Activated CD8-positive, alpha-beta T cell treated with anti-CD3 and anti-CD28 coated beads, Interleukin-2, amount 10 ng/mL, durations not matched to agents 7 days and 5 days (primary cell): ENCODE measurements at regions of chr2 and their contacts with region 1.

Region 1: DNA sequence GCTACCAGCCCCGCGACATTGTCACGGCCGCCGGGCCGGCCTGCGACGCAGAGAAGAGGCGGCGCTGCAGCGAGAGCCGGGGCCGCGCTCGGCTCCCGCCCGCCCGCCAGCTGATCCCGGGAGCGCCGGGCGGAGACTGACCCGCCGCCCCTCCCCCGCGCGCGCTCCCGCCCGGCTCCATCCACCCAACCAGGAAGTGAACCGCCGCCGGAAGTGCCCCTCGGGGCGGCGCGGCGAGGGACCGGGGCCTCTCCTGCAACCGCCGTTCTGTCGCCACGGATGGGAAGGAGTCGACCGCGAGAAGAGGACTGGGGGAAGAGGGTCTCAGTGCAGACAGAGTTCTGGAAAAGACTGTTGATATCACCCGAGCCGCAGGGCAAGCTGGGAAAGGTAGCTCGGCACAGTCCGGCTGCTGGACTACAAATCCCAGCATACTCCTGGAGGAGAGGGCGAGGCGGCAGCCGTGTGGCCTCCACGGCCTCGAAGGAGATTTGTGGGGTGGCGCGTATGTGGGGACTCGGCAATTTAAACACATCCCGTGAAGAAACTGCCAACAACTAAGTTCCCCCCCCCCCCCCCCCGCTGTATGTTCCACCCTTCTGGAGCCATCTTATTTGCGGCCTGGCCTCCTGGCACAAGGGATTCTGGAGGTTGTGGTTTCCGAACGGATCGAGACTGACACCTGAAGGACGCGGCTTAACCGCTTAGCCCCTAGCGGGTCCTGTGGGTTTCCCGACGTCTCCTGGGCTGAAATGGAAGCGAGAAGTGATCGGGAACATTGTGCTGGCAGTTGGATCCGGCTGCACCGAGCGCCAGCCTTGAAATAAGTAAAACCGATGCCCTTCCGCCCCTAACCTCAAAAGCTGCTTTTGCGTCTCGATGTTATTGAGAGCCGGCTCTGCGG is at the start of gene AAK1:
- DNase-seq: peak; percentile 90
- ATAC-seq: peak; percentile 66
- H3K4me3 Mint-ChIP-seq: peak within 1 kb of the TSS; percentile 92
- H3K27ac Mint-ChIP-seq: peak within 1 kb of the TSS; percentile 98
- H3K4me1 Mint-ChIP-seq: peaks cover 56% of the 10 kb centered on the region
- H3K27me3 Mint-ChIP-seq: no peaks in the 10 kb centered on the region
- total RNA-seq, gene AAK1: 105 to 107 TPM

Region 2: GRCh38 chr2:69559442-69560146 is 84.3 kb before region 1 on chr2:
- CTCF ChIA-PET with region 1: interaction called, 43 read pairs
- POLR2A ChIA-PET with region 1: no interaction called
- DNase-seq: no peak
- ATAC-seq: peak; percentile 54
- H3K4me3 Mint-ChIP-seq: no peak overlapping the region
- H3K27ac Mint-ChIP-seq: no peak overlapping the region
- H3K4me1 Mint-ChIP-seq: peaks cover 48% of the 10 kb centered on the region
- H3K27me3 Mint-ChIP-seq: no peaks in the 10 kb centered on the region

Region 3: GRCh38 chr2:69628325-69629021 is 15.4 kb before region 1 on chr2:
- CTCF ChIA-PET with region 1: interaction called, 26 read pairs
- POLR2A ChIA-PET with region 1: interaction called, 13 read pairs
- DNase-seq: no peak
- ATAC-seq: peak; percentile 55
- H3K4me3 Mint-ChIP-seq: no peak overlapping the region
- H3K27ac Mint-ChIP-seq: no peak overlapping the region
- H3K4me1 Mint-ChIP-seq: peaks cover 26% of the 10 kb centered on the region
- H3K27me3 Mint-ChIP-seq: no peaks in the 10 kb centered on the region

Region 4: DNA sequence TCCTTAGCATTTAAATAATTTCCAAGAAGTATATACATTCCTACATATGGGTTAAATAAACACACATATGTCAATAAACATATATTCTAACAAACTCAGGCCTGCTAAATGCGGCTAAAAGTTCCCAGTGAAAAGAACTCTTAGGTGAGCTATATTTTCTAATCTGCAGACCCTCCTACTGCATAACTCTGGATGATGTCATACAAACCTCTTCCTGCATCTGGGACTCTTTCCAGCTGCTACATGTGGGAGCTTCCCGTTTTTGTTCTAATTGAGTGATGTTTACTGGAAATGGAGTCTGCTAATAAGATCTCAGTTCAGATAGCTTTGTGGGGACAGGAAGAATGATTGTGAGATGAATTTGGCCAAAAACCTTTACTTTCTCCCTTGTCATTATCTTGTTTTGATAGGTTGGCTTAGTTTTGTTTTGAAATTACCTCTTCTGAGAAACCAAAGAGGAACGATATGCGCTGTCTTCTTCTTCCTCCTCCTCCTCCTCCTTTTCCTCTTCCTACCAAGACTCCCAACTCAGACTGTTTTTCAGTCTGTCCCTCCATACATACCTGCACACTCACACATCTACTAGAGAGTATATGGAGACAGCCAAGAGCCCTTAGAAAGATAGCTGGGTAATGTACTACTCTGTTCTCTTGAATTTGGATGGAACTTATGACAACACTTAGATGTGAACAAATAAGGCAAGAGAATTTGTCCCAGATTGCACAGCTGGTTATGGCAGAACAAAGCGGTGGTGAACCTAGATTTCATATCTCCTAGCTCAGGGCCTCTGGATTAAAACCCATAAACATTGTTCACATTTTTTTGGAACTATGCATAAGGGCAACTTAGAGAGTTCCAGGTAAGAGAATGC is 39.5 kb after region 1 on chr2:
- CTCF ChIA-PET with region 1: interaction called, 17 read pairs
- POLR2A ChIA-PET with region 1: interaction called, 22 read pairs
- DNase-seq: no peak
- ATAC-seq: peak; percentile 35
- H3K4me3 Mint-ChIP-seq: peak overlapping the region; percentile 26
- H3K27ac Mint-ChIP-seq: peak overlapping the region; percentile 68
- H3K4me1 Mint-ChIP-seq: peaks cover 51% of the 10 kb centered on the region
- H3K27me3 Mint-ChIP-seq: no peaks in the 10 kb centered on the region

Region 5: GRCh38 chr2:69717861-69718273 is 74.0 kb after region 1 on chr2:
- CTCF ChIA-PET with region 1: interaction called, 45 read pairs
- POLR2A ChIA-PET with region 1: interaction called, 14 read pairs
- DNase-seq: no peak
- ATAC-seq: no peak
- H3K4me3 Mint-ChIP-seq: no peak overlapping the region
- H3K27ac Mint-ChIP-seq: no peak overlapping the region
- H3K4me1 Mint-ChIP-seq: peaks cover 7% of the 10 kb centered on the region
- H3K27me3 Mint-ChIP-seq: peaks cover 2% of the 10 kb centered on the region